Dorsolateral prefrontal cortex (tissue), 120 donors: ENCODE measurements at regions of chr4 and their contacts with region 1.

Region 1: DNA sequence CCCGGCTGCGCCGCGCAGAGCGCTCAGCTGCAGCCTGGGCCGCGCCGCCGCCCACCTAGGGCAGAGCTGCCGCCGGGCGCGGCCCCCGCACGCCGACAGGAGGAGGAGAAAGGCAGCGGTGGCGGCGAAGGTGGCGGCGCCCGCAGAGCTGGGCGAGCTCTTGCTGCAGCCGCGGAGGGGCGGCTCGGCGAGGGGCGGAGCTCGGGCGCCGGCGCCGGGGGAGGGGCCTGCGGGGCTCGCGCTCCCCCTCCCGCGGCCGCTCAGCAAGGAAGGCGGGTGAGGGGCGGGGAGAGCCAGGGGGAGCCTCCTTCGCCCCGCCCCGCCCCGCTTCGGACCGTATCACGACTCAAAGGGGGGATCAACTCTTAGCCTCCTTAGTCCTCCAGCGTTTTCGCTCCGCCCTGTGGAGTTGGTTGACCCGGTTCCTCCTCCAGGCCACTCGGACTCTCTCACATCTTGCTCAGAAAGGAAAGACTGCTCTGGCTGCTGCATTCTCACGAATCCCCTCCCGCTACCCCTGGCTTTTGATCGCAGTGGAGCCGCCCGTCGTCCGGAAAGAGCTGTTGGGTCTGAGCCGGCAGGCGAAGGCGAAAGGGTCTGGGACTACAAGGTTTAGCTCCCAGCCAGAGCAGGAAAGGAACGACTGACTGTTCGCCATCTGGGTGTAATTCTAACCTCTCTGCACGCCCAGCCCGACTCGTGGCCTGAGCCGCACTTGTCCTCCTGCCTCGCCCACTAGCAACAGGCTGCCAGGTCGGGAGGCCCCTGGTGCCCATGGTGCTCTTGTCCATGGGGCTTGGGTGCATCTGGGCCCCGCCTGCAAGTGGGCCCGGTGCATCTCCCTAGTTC is at the start of gene ATP8A1:
- DNase-seq: peak; percentile 81 to 95 (median 92)
- H3K4me3 ChIP-seq: peak within 1 kb of the TSS; percentile 63 to 98 (median 92)
- H3K27ac ChIP-seq: peak within 1 kb of the TSS; percentile 89 to 99 (median 96)
- H3K27me3 ChIP-seq: no peaks in the 10 kb centered on the region
- CTCF ChIP-seq: peak in 22 of 56 donors; percentile 4 to 38 (median 16)
- total RNA-seq, gene ATP8A1: 78.1 to 308 (median 175) TPM

Region 2: GRCh38 chr4:42568610-42569207 is 88.5 kb before region 1 on chr4:
- intact Hi-C with region 1: loop called (anchors 2 kb)
- DNase-seq: peak in 9 of 10 donors; percentile 45 to 86 (median 65)
- H3K4me3 ChIP-seq: no peak overlapping the region
- H3K27ac ChIP-seq: peak overlapping the region in 52 of 59 donors; percentile 5 to 96 (median 86)
- H3K27me3 ChIP-seq: no peaks in the 10 kb centered on the region
- CTCF ChIP-seq: peak; percentile 70 to 93 (median 85)

Region 3: DNA sequence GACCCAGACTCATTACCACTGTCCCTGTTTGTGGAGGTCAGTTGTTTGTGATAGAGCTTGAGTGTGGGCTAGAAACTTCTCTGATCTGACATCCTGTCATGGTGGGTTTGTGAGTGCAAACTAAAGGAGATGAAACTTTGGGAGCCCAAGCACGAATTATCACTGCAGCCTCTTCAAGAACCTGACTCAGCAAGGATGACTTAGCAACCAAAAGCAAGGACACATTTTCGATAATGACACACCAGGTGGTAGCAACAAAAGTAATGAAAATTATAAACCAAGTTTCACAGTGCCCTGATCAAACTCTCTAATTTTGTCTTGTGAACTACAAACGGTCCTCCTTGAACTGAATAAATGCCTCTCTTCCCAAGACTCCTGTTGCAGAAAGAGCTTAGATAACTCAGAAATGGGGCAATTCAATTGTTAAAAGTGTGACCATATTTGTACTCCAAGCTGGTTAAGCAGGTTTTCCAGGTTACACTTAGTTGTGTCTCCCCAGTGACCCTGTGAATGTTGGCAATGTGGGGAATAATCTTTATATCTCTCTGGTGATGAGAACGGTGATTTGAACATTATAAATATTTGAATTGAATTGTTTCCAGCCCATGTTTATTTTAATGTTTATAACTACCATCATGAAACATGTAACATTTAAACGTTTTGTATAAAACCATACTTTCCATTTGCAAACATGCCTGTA is 52.4 kb after region 1 on chr4:
- intact Hi-C with region 1: loop called in 1 of 2 experiments (anchors 2 kb)
- DNase-seq: no peak
- H3K4me3 ChIP-seq: peak overlapping the region in 10 of 59 donors; percentile 18 to 49 (median 34)
- H3K27ac ChIP-seq: peak overlapping the region in 58 of 59 donors; percentile 26 to 96 (median 82)
- H3K27me3 ChIP-seq: peaks cover 0 to 8% (median 0%) of the 10 kb centered on the region in 45 donors
- CTCF ChIP-seq: no peak

Region 4: DNA sequence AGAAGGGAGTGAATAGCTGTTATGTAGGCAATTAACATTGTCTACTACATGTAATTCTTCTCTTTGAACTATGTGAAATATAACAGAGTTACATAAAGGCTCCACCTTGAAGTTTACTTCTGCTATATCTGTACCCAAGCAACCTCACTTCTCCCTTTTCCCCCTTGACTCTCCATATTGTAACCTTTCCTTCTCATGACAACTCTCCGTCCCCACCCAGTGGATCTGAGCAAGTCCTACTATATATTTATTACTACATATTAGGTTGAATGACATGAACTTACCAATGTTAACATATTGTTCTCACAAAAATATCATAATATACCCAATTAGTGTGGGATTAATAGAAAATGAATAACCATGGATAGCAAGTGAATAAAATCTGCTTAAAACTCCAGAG is 92.9 kb after region 1 on chr4:
- intact Hi-C with region 1: loop called in 1 of 2 experiments (anchors 5 kb)
- DNase-seq: peak in 1 of 10 donors; percentile 10
- H3K4me3 ChIP-seq: no peak overlapping the region
- H3K27ac ChIP-seq: peak overlapping the region in 6 of 59 donors; percentile 2 to 39 (median 14)
- H3K27me3 ChIP-seq: no peaks in the 10 kb centered on the region
- CTCF ChIP-seq: peak in 48 of 56 donors; percentile 14 to 70 (median 40)

Region 5: GRCh38 chr4:42816189-42816879 is 159.2 kb after region 1 on chr4:
- intact Hi-C with region 1: loop called in 1 of 2 experiments (anchors 10 kb)
- DNase-seq: no peak
- H3K4me3 ChIP-seq: no peak overlapping the region
- H3K27ac ChIP-seq: peak overlapping the region in 1 of 59 donors; percentile 5
- H3K27me3 ChIP-seq: peaks cover 0 to 5% (median 0%) of the 10 kb centered on the region in 45 donors
- CTCF ChIP-seq: no peak

Region 6: GRCh38 chr4:42843694-42844093 is 186.5 kb after region 1 on chr4:
- intact Hi-C with region 1: loop called in 1 of 2 experiments (anchors 10 kb)
- DNase-seq: no peak
- H3K4me3 ChIP-seq: no peak overlapping the region
- H3K27ac ChIP-seq: no peak overlapping the region
- H3K27me3 ChIP-seq: no peaks in the 10 kb centered on the region
- CTCF ChIP-seq: peak in 40 of 56 donors; percentile 8 to 65 (median 30)